Activated CD4-positive, alpha-beta memory T cell treated with anti-CD3 and anti-CD28 coated beads for 36 hours (primary cell): ENCODE measurements at regions of chr14 and their contacts with region 1.

Region 1: DNA sequence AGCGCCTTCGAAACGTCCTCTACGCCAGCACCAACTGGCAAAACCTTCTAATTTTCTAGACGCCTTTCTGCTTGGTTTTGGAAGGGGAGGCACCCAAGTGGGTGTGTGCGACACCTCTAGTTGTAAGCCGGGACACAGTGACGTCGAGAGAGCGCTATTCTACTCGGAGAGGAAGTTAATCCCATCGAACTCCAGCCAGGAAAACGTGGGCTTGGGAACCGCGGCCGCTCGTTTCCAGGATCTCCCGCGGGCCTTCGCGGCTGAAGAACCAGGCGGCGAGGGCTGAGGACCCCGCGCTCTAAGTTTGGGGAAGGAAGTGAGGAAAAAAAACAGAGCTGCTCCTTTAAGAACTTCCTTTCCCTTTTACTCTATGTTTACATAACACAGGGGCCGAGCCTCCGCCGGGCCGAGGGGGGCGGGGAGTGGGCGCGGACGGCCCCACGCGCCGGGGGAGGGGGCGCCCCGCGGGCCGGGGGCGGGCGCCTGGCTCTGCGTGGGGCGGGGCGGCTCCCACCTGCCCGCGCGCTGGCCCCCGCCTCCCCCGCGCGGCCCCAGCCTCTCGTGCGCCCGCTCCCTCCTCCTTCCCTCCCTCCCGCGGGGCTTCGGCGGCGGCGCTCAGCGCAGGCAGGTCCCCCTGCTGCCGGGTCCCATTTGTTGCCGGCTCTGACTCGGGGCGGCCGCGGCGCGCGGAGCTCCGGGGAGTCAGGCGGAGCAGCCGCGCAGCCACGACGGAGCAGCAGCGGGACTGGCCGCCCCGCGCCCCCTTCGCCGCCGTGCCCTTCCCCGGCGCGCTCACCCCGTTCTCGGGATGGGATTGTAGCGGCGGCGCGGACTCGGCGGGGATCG is at the start of gene PELI2:
- DNase-seq: peak; percentile 80
- H3K4me3 Mint-ChIP-seq: peak within 1 kb of the TSS; percentile 90
- H3K27ac Mint-ChIP-seq: peak within 1 kb of the TSS; percentile 83
- H3K4me1 Mint-ChIP-seq: peaks cover 41% of the 10 kb centered on the region
- H3K27me3 Mint-ChIP-seq: peaks cover 11% of the 10 kb centered on the region
- total RNA-seq, gene PELI2: 6.4 to 6.6 TPM

Region 2: GRCh38 chr14:55579724-55580469 is 538.1 kb before region 1 on chr14 and contains the start of gene KTN1:
- CTCF ChIA-PET with region 1: no interaction called
- POLR2A ChIA-PET with region 1: no interaction called
- intact Hi-C with region 1: loop called (anchors 5 kb)
- DNase-seq: peak; percentile 87
- H3K4me3 Mint-ChIP-seq: peak within 1 kb of the TSS; percentile 92
- H3K27ac Mint-ChIP-seq: peak within 1 kb of the TSS; percentile 90
- H3K4me1 Mint-ChIP-seq: peaks cover 31% of the 10 kb centered on the region
- H3K27me3 Mint-ChIP-seq: no peaks in the 10 kb centered on the region
- total RNA-seq, gene KTN1: 126 to 134 TPM

Region 3: GRCh38 chr14:56004786-56005185 is 113.2 kb before region 1 on chr14:
- CTCF ChIA-PET with region 1: no interaction called
- POLR2A ChIA-PET with region 1: no interaction called
- intact Hi-C with region 1: loop called (anchors 2 kb)
- DNase-seq: peak; percentile 46
- H3K4me3 Mint-ChIP-seq: no peak overlapping the region
- H3K27ac Mint-ChIP-seq: no peak overlapping the region
- H3K4me1 Mint-ChIP-seq: peaks cover 32% of the 10 kb centered on the region
- H3K27me3 Mint-ChIP-seq: peaks cover 52% of the 10 kb centered on the region

Region 4: DNA sequence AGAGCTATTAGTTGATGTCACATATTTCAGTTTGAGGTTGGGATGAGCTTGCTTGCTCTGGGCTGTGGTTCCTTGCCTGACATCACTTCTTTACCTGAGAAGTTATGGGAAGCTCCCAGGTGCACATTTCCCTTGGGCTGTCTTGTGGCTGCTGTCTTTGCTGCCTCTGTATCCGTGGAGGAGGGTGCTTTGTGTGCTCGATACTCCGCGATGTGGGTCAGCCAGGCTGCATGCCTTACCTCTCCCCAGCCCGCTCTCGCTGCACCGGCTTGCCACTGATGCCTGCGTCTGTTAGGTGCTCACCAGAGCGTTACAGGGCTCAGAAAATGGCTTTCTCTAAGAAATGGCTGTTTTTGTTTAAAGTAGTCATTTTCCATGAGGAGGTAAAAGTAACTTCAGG is 19.9 kb after region 1 on chr14:
- CTCF ChIA-PET with region 1: interaction called, 3 read pairs
- POLR2A ChIA-PET with region 1: interaction called, 3 read pairs
- intact Hi-C with region 1: loop called (anchors 2 kb)
- DNase-seq: no peak
- H3K4me3 Mint-ChIP-seq: no peak overlapping the region
- H3K27ac Mint-ChIP-seq: no peak overlapping the region
- H3K4me1 Mint-ChIP-seq: peaks cover 40% of the 10 kb centered on the region
- H3K27me3 Mint-ChIP-seq: peaks cover 13% of the 10 kb centered on the region

Region 5: GRCh38 chr14:56339855-56340701 is 222.1 kb after region 1 on chr14:
- CTCF ChIA-PET with region 1: interaction called, 4 read pairs
- POLR2A ChIA-PET with region 1: no interaction called
- intact Hi-C with region 1: loop called (anchors 5 kb)
- DNase-seq: peak; percentile 72
- H3K4me3 Mint-ChIP-seq: no peak overlapping the region
- H3K27ac Mint-ChIP-seq: no peak overlapping the region
- H3K4me1 Mint-ChIP-seq: peaks cover 2% of the 10 kb centered on the region
- H3K27me3 Mint-ChIP-seq: no peaks in the 10 kb centered on the region

Region 6: DNA sequence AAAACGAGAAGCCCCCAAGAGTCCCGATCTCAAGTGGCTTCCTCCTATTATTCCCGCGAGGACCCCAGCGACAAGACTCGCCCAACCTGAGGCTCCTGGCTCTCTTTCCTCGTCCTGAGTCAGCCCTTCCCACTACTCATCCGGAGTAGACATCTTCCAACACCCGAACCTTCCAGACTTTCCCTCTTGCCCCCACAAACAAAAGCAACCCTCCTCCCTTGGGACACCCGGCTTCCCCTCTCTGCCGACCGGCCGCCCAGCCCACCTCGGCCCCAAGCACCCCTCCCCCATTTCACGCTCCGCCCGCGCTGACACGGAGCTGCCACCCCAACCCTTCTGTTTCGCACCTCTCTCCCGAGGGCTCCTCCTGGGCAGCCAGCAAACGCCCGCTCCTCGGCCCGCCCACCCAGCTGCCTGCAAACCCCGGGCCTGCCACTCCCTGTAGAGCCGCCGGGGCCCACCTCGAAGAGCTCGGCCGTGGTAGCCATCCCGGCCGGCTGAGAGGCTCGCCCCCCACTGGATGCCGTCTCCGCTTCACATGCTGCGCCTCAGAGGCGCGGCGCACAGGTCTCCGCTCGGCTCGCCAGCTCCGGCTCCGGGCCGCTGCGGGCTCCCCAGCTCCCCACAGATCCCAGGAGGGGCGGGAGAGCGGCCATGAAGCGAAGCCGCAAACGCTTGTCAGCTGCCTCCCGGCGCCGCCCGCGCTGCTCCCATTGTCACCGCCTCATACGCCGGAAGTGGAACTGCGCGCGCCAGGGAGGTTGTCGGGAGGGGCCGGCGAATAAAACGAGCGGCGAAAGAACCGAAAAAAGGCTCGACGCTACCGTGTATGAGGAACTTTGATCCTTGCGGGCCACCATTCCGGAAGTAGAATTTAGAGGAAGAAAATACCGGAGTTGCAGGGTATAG is 1150.4 kb after region 1 on chr14 and contains the starts of genes AP5M1 and EXOC5:
- CTCF ChIA-PET with region 1: no interaction called
- POLR2A ChIA-PET with region 1: no interaction called
- intact Hi-C with region 1: loop called (anchors 2 kb)
- DNase-seq: peak; percentile 96
- H3K4me3 Mint-ChIP-seq: peak within 1 kb of the TSS; percentile 99
- H3K27ac Mint-ChIP-seq: peak within 1 kb of the TSS; percentile 99
- H3K4me1 Mint-ChIP-seq: peaks cover 48% of the 10 kb centered on the region
- H3K27me3 Mint-ChIP-seq: no peaks in the 10 kb centered on the region
- total RNA-seq, gene AP5M1: 27.7 to 31.1 TPM
- total RNA-seq, gene EXOC5: 82.1 to 82.6 TPM